ENCODE measurements at regions of chr15 and their contacts with region 1.

Region 1: GRCh38 chr15:38843736-38844590 is 279.3 kb upstream of the RASGRP1 start:
- DNase-seq: no peak
- H3K4me3 ChIP-seq: no peak overlapping the region
- CTCF ChIP-seq: no peak
- POLR2A ChIP-seq: no peak

Region 2: GRCh38 chr15:38406436-38406835 is 437.5 kb before region 1 on chr15:
- intact Hi-C with region 1: no loop called
- DNase-seq: no peak
- H3K4me3 ChIP-seq: no peak overlapping the region
- CTCF ChIP-seq: no peak
- POLR2A ChIP-seq: no peak

Region 3: DNA sequence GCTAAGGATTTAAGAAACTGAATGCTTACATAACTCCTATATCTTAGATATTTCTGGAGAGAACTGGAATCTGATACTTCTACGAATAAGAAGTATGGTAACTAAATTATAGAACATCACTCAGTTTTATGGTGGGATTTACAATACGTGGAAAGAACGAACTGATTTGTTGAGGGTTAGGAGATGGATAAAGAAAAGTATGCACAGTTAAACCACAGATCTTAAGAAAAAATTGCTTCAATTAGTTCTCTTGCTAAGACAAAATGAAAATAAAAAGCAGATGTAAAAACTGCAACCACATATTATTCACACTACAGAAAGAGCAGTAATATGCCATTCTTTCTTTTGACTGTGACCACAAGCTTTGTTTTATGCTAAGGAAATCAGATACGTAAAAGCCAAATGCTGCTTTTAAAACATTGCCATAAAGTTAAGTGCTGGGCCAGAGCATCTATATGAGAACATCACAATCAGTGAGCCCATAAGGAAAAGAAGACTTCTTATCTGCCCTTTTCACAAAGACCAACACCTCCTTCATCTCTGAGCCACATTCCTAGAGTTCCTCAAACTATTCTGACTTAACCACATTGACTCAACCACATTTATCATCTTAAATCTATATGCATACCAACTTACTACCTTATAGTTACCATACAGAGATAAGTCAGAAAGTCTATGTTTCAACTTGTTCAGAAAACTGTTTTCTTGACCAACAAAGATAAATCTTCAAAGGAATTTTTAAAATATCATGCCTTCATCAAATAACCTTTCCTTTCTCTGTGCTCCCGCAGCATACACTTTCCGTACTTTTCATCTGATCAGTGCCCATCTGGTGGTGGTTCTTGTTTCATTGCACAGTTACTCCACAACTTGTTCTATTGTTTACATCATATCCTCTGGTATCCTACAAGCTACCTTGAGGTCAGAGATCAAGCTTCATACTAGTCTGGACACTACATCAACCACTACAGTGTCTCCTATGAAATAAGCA is 877.0 kb after region 1 on chr15:
- intact Hi-C with region 1: loop called (anchors 10 kb)
- DNase-seq: no peak
- H3K4me3 ChIP-seq: no peak overlapping the region
- CTCF ChIP-seq: no peak
- POLR2A ChIP-seq: no peak

Measured in lower leg skin (tissue), 4 donors.